T-cell (primary cell): ENCODE measurements at regions of chr9 and their contacts with region 1.

Region 1: DNA sequence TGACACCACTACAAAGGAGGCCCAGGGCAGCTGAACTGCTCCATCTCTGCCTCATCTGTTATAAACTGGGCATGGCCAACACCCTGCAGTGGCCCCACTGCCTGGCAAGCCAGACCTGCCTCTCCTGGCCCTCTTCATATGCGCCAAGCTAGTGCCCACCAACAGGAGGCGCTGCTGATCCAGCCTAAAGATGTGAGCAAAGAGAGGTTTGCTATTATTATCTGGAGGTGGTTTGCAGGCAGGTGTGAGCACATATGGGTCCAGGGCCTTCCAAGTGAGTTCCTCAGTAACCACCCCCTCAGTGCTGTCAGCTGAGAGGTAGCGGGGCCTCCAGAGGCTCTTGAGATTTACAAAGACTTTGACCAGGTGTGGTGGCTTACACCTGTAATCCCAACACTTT is 232.2 kb downstream of the SYK start:
- DNase-seq: peak; percentile 15 to 75 (median 52)
- ATAC-seq: peak in 2 of 4 experiments; percentile 22 to 38
- H3K4me3 ChIP-seq: no peak overlapping the region
- H3K4me3 Mint-ChIP-seq: no peak overlapping the region
- H3K27ac ChIP-seq: no peak overlapping the region
- H3K27ac Mint-ChIP-seq: no peak overlapping the region
- H3K4me1 ChIP-seq: peaks cover 2 to 14% of the 10 kb centered on the region in 2 experiments
- H3K4me1 Mint-ChIP-seq: peaks cover 9 to 12% (median 10%) of the 10 kb centered on the region in 3 donors
- H3K27me3 ChIP-seq: peaks cover 0 to 22% of the 10 kb centered on the region in 2 experiments
- H3K27me3 Mint-ChIP-seq: peaks cover 19 to 25% of the 10 kb centered on the region in 2 donors

Region 2: GRCh38 chr9:90778746-90779145 is 255.1 kb before region 1 on chr9:
- CTCF ChIA-PET with region 1: no interaction called
- POLR2A ChIA-PET with region 1: no interaction called
- DNase-seq: no peak
- ATAC-seq: no peak
- H3K4me3 ChIP-seq: no peak overlapping the region
- H3K4me3 Mint-ChIP-seq: no peak overlapping the region
- H3K27ac ChIP-seq: no peak overlapping the region
- H3K27ac Mint-ChIP-seq: no peak overlapping the region
- H3K4me1 ChIP-seq: no peaks in the 10 kb centered on the region
- H3K4me1 Mint-ChIP-seq: no peaks in the 10 kb centered on the region
- H3K27me3 ChIP-seq: peaks cover 0 to 11% of the 10 kb centered on the region in 2 experiments
- H3K27me3 Mint-ChIP-seq: peaks cover 0 to 16% of the 10 kb centered on the region in 2 donors

Region 3: DNA sequence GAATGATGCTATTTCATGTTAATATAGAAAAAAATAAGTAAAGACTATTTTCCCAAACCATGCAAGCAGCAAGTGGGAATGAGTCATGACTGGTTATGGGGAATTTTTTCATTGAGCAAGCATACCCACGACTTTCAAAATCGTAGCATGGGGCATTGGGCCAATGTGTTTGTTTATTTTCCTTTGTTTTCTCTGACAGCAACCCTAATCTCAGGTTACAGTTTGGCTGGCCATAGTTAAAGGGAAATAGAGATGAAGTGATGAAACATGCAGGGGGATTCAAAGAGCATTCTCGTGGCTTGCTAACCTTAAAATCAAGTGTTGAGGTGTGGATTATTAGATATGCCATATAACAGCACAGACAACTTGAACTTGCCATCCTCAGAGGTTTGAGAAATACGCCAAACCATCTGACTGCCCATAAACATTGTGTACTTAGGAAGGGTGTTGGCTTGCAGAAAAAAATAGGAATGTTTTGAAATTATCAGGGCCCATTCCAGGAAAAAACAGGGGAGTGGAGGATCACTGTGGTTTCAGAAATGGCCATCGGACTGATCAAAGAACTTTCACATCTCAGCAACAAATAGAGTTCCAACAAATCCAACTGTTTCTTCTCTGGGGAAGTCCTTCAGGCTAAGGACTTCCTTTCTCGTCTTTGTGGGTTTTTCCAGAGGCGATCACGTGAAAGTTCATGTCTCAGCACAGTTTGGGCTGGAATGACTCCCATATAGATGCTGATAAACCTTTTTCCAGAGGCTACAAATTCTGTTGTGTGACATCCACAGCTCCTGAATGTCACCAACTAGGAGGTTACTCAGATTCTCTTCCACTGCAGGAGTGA is 26.9 kb after region 1 on chr9:
- CTCF ChIA-PET with region 1: no interaction called
- POLR2A ChIA-PET with region 1: interaction called in 1 of 2 experiments, 15 read pairs
- DNase-seq: no peak
- ATAC-seq: no peak
- H3K4me3 ChIP-seq: no peak overlapping the region
- H3K4me3 Mint-ChIP-seq: no peak overlapping the region
- H3K27ac ChIP-seq: no peak overlapping the region
- H3K27ac Mint-ChIP-seq: no peak overlapping the region
- H3K4me1 ChIP-seq: no peaks in the 10 kb centered on the region
- H3K4me1 Mint-ChIP-seq: no peaks in the 10 kb centered on the region
- H3K27me3 ChIP-seq: peaks cover 0 to 9% of the 10 kb centered on the region in 2 experiments
- H3K27me3 Mint-ChIP-seq: peaks cover 9 to 13% of the 10 kb centered on the region in 2 donors

Region 4: GRCh38 chr9:91395553-91396471 is 362.0 kb after region 1 on chr9:
- CTCF ChIA-PET with region 1: interaction called in 1 of 2 experiments, 19 read pairs
- POLR2A ChIA-PET with region 1: no interaction called
- DNase-seq: no peak
- ATAC-seq: no peak
- H3K4me3 ChIP-seq: no peak overlapping the region
- H3K4me3 Mint-ChIP-seq: no peak overlapping the region
- H3K27ac ChIP-seq: no peak overlapping the region
- H3K27ac Mint-ChIP-seq: no peak overlapping the region
- H3K4me1 ChIP-seq: no peaks in the 10 kb centered on the region
- H3K4me1 Mint-ChIP-seq: peaks cover 0 to 10% (median 8%) of the 10 kb centered on the region in 3 donors
- H3K27me3 ChIP-seq: peaks cover 0 to 3% of the 10 kb centered on the region in 2 experiments
- H3K27me3 Mint-ChIP-seq: peaks cover 0 to 2% of the 10 kb centered on the region in 2 donors